Activated CD4-positive, alpha-beta memory T cell treated with anti-CD3 and anti-CD28 coated beads for 36 hours (primary cell): ENCODE measurements at regions of chr20 and their contacts with region 1.

Region 1: DNA sequence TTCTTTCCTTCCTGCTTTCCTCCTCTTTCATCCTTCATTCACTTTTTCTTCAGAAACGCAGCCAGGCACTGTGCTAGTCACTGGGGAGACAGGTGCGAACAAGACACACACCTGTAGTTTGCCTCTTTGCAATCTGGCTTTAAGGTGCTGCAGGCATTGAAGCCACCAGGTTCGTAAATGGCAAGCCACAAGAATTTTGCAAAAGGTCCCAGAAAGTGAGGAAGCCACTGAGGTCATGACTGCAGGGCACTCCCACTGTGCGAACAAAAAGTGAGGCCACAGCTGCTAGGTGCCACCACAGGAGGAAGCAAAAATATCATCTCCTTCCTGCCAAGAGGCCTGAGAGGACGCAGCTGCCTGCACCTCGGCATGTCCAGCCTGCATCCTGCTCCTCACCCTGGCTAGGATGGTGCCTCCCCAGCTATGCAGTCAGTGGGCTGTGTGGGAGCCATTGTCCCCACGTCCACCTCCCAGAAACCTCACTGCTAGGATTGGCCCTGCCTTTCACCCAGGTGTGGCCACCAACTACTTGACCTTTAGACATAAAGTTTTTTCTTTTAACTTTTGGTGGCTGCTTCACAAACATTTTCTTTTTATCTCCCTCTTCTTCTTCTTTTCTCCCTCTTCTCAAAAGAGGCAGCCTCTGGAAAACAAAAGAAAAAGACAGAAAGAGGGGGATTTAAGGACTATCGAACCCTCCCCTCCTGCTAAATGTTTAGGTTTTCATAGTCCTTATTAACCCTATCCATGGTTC is 230.8 kb downstream of the BCAS1 start:
- DNase-seq: peak; percentile 66
- H3K4me3 Mint-ChIP-seq: peak overlapping the region; percentile 58
- H3K27ac Mint-ChIP-seq: peak overlapping the region; percentile 76
- H3K4me1 Mint-ChIP-seq: peaks cover 64% of the 10 kb centered on the region
- H3K27me3 Mint-ChIP-seq: no peaks in the 10 kb centered on the region

Region 2: GRCh38 chr20:53660078-53660909 is 179.3 kb before region 1 on chr20:
- CTCF ChIA-PET with region 1: no interaction called
- POLR2A ChIA-PET with region 1: no interaction called
- intact Hi-C with region 1: no loop called
- DNase-seq: peak; percentile 58
- H3K4me3 Mint-ChIP-seq: peak overlapping the region; percentile 78
- H3K27ac Mint-ChIP-seq: peak overlapping the region; percentile 83
- H3K4me1 Mint-ChIP-seq: peaks cover 55% of the 10 kb centered on the region
- H3K27me3 Mint-ChIP-seq: no peaks in the 10 kb centered on the region

Region 3: DNA sequence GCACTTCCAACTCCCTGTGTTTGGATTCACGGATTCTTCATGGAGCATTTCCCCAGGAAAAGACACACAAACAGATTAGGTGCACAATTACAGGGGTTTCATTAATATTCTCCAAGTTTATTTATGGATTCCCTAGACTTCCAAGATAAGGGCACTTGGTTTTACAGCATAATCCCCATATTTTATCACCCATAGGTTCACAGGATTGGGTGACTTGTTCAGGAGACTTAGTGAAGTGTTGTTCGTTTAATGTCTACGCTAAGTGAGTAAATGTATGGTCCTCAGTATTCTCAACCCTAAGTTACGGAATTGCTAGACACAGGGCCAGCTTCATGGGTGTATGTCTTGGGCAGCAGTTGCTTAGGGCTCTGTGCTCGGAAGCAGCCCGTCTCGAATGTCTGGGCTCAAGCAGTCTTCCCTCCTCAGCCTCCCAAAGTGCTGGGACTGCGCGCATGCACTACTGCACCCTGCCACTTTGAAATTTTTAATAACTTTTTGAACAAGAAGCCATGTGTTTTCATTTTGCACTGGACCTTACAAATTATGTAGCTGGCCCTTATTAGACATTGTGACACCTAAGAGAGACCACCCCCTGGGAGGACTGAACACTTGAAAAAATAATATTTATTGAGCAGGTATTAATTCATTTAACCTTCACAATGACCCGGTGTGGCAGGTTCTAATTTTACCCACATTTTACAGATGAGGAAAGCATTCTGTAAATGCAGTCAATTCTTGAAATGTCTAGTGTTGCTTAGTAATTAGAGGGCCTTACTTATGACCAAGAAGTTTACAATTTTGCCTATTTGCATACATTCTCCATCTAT is 154.4 kb before region 1 on chr20:
- CTCF ChIA-PET with region 1: no interaction called
- POLR2A ChIA-PET with region 1: no interaction called
- intact Hi-C with region 1: loop called (anchors 5 kb)
- DNase-seq: no peak
- H3K4me3 Mint-ChIP-seq: no peak overlapping the region
- H3K27ac Mint-ChIP-seq: peak overlapping the region; percentile 82
- H3K4me1 Mint-ChIP-seq: peaks cover 27% of the 10 kb centered on the region
- H3K27me3 Mint-ChIP-seq: no peaks in the 10 kb centered on the region

Region 4: DNA sequence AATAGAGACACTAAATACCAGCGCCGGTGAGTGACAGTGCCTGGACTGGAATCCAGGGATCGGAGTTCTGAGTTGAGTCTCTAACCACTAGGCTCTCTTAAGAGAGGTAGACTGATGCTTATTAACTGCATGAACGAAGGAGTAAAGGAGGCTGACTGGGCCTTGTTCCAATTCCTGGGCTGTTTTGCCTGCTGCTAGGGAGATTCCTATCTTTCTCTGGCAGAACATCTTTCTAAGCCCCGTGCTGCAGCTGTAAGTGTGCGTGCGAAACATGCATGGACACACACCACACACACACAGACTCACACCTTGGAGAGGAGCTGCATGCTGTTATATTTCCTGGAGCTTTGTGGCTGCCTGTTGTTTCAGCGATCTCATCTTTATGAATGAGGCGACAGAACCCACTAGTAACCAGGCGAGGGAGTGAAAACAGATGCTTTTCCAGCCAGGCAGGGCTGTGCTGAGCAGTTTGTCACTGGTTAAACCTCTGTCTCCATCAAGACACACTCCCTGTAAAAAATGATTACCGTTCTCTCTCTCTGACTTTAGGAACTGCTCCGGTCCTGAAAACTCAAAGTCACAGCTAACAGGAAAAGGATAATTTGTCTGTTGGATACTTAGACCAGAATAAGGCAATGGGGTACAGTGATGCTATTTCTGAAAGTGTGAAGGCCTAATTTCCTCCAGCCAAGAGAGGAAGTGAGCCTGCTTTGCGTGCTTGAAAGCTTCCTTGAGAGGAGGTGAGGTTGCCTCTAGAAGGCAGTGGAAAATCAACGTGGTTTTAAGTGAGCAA is 88.6 kb before region 1 on chr20:
- CTCF ChIA-PET with region 1: interaction called, 4 read pairs
- POLR2A ChIA-PET with region 1: no interaction called
- intact Hi-C with region 1: loop called (anchors 1 kb)
- DNase-seq: peak; percentile 53
- H3K4me3 Mint-ChIP-seq: peak overlapping the region; percentile 45
- H3K27ac Mint-ChIP-seq: peak overlapping the region; percentile 95
- H3K4me1 Mint-ChIP-seq: peaks cover 60% of the 10 kb centered on the region
- H3K27me3 Mint-ChIP-seq: no peaks in the 10 kb centered on the region

Region 5: GRCh38 chr20:53786445-53787267 is 52.9 kb before region 1 on chr20:
- CTCF ChIA-PET with region 1: no interaction called
- POLR2A ChIA-PET with region 1: no interaction called
- intact Hi-C with region 1: no loop called
- DNase-seq: no peak
- H3K4me3 Mint-ChIP-seq: no peak overlapping the region
- H3K27ac Mint-ChIP-seq: no peak overlapping the region
- H3K4me1 Mint-ChIP-seq: peaks cover 11% of the 10 kb centered on the region
- H3K27me3 Mint-ChIP-seq: no peaks in the 10 kb centered on the region

Region 6: DNA sequence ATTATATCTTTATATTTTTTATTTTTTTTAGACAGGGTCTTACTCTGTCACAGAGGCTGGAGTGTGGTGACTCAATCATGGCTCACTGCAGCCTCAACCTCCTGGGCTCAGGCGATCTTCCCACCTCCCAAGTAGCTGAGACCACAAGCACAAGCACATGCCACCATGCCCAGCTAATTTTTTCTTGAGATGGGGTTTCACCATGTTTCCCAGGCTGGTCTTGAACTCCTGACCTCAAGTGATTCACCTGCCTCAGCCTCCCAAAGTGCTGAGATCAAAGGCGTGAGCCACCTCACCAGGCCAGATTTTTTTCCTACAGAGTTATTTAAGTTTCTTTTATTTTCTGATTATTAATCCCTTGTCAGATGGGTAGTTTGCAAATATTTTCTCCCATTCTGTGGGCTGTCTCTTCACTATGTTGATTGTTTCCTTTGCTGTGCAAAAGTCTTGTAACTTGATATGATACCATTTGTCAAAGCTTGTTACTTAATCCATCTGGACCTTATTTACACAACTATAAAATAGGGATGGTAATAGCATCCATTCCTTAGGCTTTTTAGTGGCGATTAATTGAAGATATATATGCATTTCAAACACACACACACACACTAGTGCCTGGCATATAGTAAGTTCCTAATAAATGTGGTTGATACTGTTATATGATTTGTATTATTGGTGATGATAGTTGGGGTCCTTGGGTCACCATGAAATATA is 43.7 kb after region 1 on chr20:
- CTCF ChIA-PET with region 1: no interaction called
- POLR2A ChIA-PET with region 1: no interaction called
- intact Hi-C with region 1: loop called (anchors 5 kb)
- DNase-seq: peak; percentile 33
- H3K4me3 Mint-ChIP-seq: no peak overlapping the region
- H3K27ac Mint-ChIP-seq: no peak overlapping the region
- H3K4me1 Mint-ChIP-seq: peaks cover 31% of the 10 kb centered on the region
- H3K27me3 Mint-ChIP-seq: no peaks in the 10 kb centered on the region

Region 7: GRCh38 chr20:53891306-53891944 is 51.8 kb after region 1 on chr20:
- CTCF ChIA-PET with region 1: no interaction called
- POLR2A ChIA-PET with region 1: no interaction called
- intact Hi-C with region 1: loop called (anchors 2 kb)
- DNase-seq: no peak
- H3K4me3 Mint-ChIP-seq: no peak overlapping the region
- H3K27ac Mint-ChIP-seq: no peak overlapping the region
- H3K4me1 Mint-ChIP-seq: peaks cover 30% of the 10 kb centered on the region
- H3K27me3 Mint-ChIP-seq: no peaks in the 10 kb centered on the region